ENCODE measurements at regions of chr17 and their contacts with region 1.

Region 1: DNA sequence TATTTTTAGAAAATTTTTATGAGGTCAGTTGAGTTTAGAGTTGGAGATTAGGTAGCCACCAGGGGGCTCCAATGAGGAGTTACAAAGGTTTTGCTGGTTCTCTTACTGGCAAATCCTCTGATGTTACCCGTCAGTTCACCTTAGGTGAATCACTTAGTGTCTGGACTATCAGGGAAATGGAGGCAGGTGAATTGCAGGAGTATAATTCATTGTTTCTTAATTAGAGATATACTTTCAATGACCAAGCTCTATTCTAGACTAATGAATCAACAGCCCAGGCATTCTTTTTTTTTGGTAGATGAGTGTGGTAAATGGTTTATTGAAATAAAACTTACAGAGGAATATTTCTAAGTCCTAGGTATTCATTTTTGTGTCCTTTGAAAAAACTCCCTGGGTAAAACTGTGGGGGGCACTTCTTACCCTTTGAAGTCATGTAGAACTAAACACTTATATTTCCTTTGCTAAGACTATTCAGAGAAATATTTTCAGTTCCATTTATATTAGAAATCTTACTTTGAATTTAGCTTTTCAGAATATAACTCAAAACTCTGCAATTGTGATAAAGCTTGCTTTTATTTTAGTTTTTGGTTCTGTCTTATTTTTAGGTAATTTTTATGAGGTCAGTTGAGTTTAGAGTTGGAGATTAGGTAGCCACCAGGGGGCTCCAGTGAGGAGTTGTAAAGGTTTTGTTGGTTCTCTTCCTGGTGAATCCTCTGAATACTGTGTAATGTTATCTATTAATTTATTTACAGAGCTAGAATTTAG is 17.7 kb downstream of the PSMD11 start:
- DNase-seq: peak; percentile 52
- H3K4me3 ChIP-seq: no peak overlapping the region
- H3K27ac ChIP-seq: no peak overlapping the region
- H3K4me1 ChIP-seq: no peaks in the 10 kb centered on the region
- H3K27me3 ChIP-seq: no peaks in the 10 kb centered on the region
- CTCF ChIP-seq: peak; percentile 72
- EP300 ChIP-seq: no peak
- RAD21 ChIP-seq: peak; percentile 38; the same call in 1 of the 2 replicates

Region 2: DNA sequence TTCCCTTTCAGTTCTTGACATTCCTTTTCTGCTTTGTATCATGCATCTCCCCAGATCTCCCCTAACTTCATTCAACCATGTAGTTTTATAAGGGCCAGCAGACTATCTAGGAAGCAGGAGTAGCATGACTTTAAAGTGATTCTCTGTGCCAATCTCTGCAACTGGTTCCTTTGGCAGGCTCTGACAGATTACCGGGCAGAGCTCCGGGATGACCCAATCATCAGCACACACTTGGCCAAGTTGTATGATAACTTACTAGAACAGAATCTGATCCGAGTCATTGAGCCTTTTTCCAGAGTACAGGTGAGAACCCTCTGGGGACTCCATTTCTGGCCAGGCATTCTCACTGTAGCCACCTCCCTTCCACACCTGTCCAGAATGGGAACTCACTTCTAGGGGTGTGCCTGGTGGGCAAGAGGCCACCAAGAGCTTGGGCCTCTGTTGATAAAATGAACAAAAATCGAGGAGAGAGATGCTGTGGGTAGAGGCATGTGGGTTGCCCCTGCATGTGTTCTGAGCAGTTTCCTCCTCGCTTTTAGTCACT is 17.1 kb after region 1 on chr17:
- CTCF ChIA-PET with region 1: interaction called, 102 read pairs
- POLR2A ChIA-PET with region 1: interaction called, 4 read pairs
- DNase-seq: no peak
- H3K4me3 ChIP-seq: no peak overlapping the region
- H3K27ac ChIP-seq: no peak overlapping the region
- H3K4me1 ChIP-seq: peaks cover 0 to 12% of the 10 kb centered on the region in 2 experiments; a peak in 1 of 4 replicates
- H3K27me3 ChIP-seq: no peaks in the 10 kb centered on the region
- CTCF ChIP-seq: no peak
- EP300 ChIP-seq: no peak
- RAD21 ChIP-seq: no peak

Region 3: GRCh38 chr17:32746698-32747097 is 284.7 kb after region 1 on chr17:
- CTCF ChIA-PET with region 1: interaction called, 11 read pairs
- POLR2A ChIA-PET with region 1: no interaction called
- DNase-seq: no peak
- H3K4me3 ChIP-seq: no peak overlapping the region
- H3K27ac ChIP-seq: no peak overlapping the region
- H3K4me1 ChIP-seq: no peaks in the 10 kb centered on the region; a peak in 1 of 4 replicates
- H3K27me3 ChIP-seq: no peaks in the 10 kb centered on the region
- CTCF ChIP-seq: no peak
- EP300 ChIP-seq: no peak
- RAD21 ChIP-seq: no peak

Region 4: GRCh38 chr17:32769839-32770238 is 307.8 kb after region 1 on chr17:
- CTCF ChIA-PET with region 1: interaction called, 18 read pairs
- POLR2A ChIA-PET with region 1: no interaction called
- DNase-seq: no peak
- H3K4me3 ChIP-seq: no peak overlapping the region
- H3K27ac ChIP-seq: no peak overlapping the region
- H3K4me1 ChIP-seq: no peaks in the 10 kb centered on the region; a peak in 1 of 4 replicates
- H3K27me3 ChIP-seq: no peaks in the 10 kb centered on the region
- CTCF ChIP-seq: no peak
- EP300 ChIP-seq: no peak
- RAD21 ChIP-seq: peak; percentile 22; the same call in 1 of the 2 replicates